PC-3 (cell line): ENCODE measurements at regions of chrX and their contacts with region 1.

Region 1: DNA sequence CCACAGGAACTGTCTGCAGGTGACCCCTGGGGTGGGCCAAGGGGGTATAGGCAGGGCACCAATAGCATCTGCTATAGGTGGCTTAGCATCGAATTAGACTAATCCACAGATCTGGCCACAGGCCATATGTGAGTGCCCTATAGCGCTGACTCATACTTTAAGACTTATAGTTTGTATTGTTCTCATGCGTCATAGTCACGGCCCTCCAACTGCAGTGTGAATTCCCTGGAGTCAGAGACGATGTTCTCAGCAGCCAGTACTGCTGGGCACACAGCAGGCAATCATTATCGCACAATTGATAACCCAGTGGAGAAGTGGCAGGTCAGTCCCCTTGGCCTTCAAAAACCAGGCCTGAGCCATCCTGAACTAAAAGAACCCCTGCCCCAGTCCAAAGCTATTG is 58.1 kb downstream of the ADGRG2 start:
- DNase-seq: peak; percentile 89
- ATAC-seq: peak; percentile 97
- H3K4me3 ChIP-seq: no peak overlapping the region
- H3K27ac ChIP-seq: peak overlapping the region; percentile 59
- H3K4me1 ChIP-seq: peaks cover 22% of the 10 kb centered on the region
- H3K27me3 ChIP-seq: no peaks in the 10 kb centered on the region
- CTCF ChIP-seq: no peak

Region 2: DNA sequence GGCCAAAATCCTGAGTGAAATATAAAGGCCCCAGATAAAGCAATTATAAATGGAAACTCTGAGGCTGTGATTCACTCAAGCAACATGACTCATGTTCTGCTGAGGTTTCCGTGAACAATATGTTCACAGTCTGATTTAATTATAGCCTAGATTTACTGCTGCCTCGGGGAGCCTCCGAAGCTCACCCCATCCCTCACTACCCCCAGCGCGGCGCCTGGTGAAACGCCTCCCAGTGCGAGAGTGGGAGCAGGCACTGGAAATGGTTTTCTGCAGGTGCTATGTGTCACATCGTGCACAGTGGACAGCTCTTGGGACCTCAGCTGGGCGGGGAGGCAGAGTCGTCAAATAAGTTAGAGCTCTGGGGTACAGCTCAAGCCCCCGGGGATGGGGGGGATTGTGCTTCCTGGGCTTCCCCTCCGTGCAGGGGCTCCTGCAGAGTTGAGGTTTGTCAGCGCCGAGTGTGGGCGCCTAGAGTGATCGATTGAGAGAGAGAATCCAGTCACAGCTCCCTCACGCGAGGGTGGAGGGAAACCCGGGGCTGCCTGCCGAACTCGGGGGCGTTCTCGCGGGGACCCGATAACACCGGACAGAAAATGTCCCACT is 190.9 kb before region 1 on chrX:
- CTCF ChIA-PET with region 1: no interaction called
- POLR2A ChIA-PET with region 1: no interaction called
- intact Hi-C with region 1: no loop called
- DNase-seq: peak; percentile 68
- ATAC-seq: peak; percentile 95
- H3K4me3 ChIP-seq: peak overlapping the region; percentile 21; the same call in 1 of the 2 replicates
- H3K27ac ChIP-seq: 0 out of 2 replicates have a peak overlapping the region, but pooled peaks have one; percentile 16
- H3K4me1 ChIP-seq: peaks cover 12% of the 10 kb centered on the region
- H3K27me3 ChIP-seq: no peaks in the 10 kb centered on the region
- CTCF ChIP-seq: no peak

Region 3: DNA sequence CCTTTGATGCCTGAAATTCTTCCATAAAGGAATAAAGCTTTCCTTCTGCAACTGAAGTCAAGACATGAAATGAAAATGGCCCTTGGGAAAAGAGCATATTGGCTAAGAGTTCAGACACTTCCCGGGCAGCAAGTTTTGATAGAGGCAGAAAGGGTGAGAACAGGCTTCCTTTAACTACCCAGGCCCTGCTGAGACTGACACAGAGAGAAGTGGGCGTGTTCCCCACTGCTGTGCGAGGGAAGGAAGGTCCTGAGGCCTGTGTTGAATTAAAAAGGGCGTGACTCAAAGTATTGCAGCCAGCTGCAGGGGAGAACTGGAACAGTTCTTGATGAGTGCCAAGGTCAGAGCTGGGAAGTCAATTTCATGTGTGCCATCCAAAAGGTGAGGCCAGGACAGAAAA is 92.0 kb after region 1 on chrX:
- CTCF ChIA-PET with region 1: no interaction called
- POLR2A ChIA-PET with region 1: no interaction called
- intact Hi-C with region 1: no loop called
- DNase-seq: peak; percentile 26
- ATAC-seq: peak; percentile 63
- H3K4me3 ChIP-seq: no peak overlapping the region
- H3K27ac ChIP-seq: no peak overlapping the region
- H3K4me1 ChIP-seq: peaks cover 8% of the 10 kb centered on the region; the same call in 1 of the 2 replicates
- H3K27me3 ChIP-seq: no peaks in the 10 kb centered on the region
- CTCF ChIP-seq: no peak

Region 4: DNA sequence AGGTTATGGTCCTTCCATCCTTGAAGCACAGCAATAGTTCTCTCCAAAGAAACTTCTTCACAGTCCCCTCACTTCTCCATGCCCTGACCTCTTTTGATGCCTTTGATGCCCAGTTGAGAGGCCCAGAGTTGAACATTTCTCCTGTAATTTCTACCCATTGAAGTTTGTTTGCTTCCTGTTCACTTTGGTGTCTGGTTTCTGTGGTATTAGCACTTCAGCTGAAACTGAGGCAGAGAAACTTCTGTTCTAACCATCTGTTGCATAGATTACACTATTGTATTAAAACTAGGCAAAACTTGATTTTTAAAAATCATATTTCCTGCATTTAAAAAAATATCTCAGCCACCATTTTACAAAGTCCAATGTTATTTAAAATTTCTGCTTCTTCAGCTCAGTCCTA is 147.9 kb after region 1 on chrX:
- CTCF ChIA-PET with region 1: no interaction called
- POLR2A ChIA-PET with region 1: interaction called, 52 read pairs
- intact Hi-C with region 1: no loop called
- DNase-seq: no peak
- ATAC-seq: no peak
- H3K4me3 ChIP-seq: no peak overlapping the region
- H3K27ac ChIP-seq: no peak overlapping the region
- H3K4me1 ChIP-seq: peaks cover 22% of the 10 kb centered on the region
- H3K27me3 ChIP-seq: no peaks in the 10 kb centered on the region
- CTCF ChIP-seq: no peak